Activated naive CD4-positive, alpha-beta T cell treated with anti-CD3 and anti-CD28 coated beads for 36 hours (primary cell): ENCODE measurements at regions of chr2 and their contacts with region 1.

Region 1: DNA sequence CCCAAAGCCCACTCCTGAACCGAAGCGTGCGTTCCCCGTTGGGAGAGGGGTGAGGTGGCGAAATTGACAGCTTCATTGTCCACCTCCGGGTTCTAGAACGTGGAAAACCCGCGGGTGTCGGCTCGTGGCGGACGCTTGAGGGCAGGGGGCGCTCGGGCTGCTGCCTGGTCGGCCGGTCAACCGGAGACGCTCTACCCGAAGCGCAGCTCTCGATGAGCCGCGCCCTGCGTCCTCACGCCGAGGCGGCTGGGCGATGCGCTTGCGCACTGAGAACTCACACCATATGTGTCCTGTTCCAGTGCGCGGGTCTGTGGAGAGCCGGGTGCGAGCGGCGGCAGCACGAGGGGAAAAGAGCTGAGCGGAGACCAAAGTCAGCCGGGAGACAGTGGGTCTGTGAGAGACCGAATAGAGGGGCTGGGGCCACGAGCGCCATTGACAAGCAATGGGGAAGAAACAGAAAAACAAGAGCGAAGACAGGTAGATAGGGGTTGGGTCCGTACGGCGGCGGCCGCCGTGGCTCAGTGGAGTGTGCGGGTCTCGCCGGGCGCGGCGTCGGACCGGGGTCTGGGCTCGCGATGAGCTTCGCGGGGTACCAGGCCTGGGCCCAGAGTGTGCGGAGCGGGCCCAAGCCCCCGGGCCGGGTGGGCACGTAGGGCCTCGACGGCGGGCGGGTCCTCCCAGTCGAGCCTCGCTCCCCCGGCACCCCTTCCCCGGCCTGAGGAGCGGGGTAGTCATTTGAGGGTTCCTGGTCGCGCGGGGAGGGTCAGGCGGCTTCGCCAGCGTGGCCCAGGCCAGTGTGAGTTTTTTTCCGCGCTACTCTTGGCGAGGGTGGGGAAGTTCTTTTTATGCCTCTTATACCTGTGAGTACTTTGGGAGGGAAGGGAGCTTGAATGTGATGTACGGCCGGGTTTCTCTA is at the start of gene EIF5B:
- DNase-seq: peak; percentile 92
- H3K4me3 Mint-ChIP-seq: no peak within 1 kb of the TSS
- H3K27ac Mint-ChIP-seq: no peak within 1 kb of the TSS
- H3K4me1 Mint-ChIP-seq: peaks cover 49% of the 10 kb centered on the region
- H3K27me3 Mint-ChIP-seq: no peaks in the 10 kb centered on the region
- total RNA-seq, gene EIF5B: 70.2 to 71.1 TPM

Region 2: GRCh38 chr2:97663965-97664635 is 1673.3 kb before region 1 on chr2 and contains the start of gene ACTR1B:
- CTCF ChIA-PET with region 1: no interaction called
- intact Hi-C with region 1: loop called (anchors 1 kb)
- DNase-seq: peak; percentile 98
- H3K4me3 Mint-ChIP-seq: peak within 1 kb of the TSS; percentile 93
- H3K27ac Mint-ChIP-seq: peak within 1 kb of the TSS; percentile 98
- H3K4me1 Mint-ChIP-seq: peaks cover 31% of the 10 kb centered on the region
- H3K27me3 Mint-ChIP-seq: no peaks in the 10 kb centered on the region
- total RNA-seq, gene ACTR1B: 103 to 104 TPM

Region 3: GRCh38 chr2:98608116-98608999 is 729.0 kb before region 1 on chr2 and contains the starts of genes COA5 and UNC50:
- CTCF ChIA-PET with region 1: no interaction called
- intact Hi-C with region 1: loop called (anchors 5 kb)
- DNase-seq: peak; percentile 90
- H3K4me3 Mint-ChIP-seq: peak within 1 kb of the TSS; percentile 89
- H3K27ac Mint-ChIP-seq: peak within 1 kb of the TSS; percentile 93
- H3K4me1 Mint-ChIP-seq: peaks cover 60% of the 10 kb centered on the region
- H3K27me3 Mint-ChIP-seq: no peaks in the 10 kb centered on the region
- total RNA-seq, gene COA5: 34.4 to 37.8 TPM
- total RNA-seq, gene UNC50: 23.0 to 24.1 TPM

Region 4: GRCh38 chr2:99154643-99155536 is 182.5 kb before region 1 on chr2 and contains the starts of genes LIPT1 and TSGA10:
- CTCF ChIA-PET with region 1: no interaction called
- intact Hi-C with region 1: loop called (anchors 1 kb)
- DNase-seq: peak; percentile 95
- H3K4me3 Mint-ChIP-seq: no peak within 1 kb of the TSS
- H3K27ac Mint-ChIP-seq: no peak within 1 kb of the TSS
- H3K4me1 Mint-ChIP-seq: peaks cover 39% of the 10 kb centered on the region
- H3K27me3 Mint-ChIP-seq: no peaks in the 10 kb centered on the region
- total RNA-seq, gene LIPT1: 7.0 to 8.1 TPM
- total RNA-seq, gene TSGA10: 7.2 to 8.9 TPM

Region 5: DNA sequence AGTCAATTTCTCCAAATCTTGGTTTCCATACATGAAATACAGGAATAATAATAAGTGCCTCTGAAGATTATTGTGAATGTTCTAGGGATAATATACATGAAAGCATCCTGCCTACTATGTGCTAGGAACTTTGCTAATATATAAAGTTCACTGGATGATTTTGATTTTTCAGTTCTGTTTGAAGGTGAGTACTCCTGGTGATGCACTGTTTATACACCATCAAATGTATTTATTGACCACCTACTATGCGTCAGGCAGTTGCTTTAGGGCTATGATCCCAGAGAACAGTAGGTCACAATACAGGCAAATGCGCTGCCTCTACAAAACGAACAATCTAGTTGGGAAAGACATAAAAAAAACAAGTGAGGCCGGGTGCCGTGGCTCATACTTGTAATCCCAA is 12.0 kb before region 1 on chr2:
- CTCF ChIA-PET with region 1: no interaction called
- intact Hi-C with region 1: no loop called
- DNase-seq: no peak
- H3K4me3 Mint-ChIP-seq: no peak overlapping the region
- H3K27ac Mint-ChIP-seq: peak overlapping the region; percentile 18
- H3K4me1 Mint-ChIP-seq: peaks cover under 1% of the 10 kb centered on the region
- H3K27me3 Mint-ChIP-seq: no peaks in the 10 kb centered on the region

Region 6: GRCh38 chr2:99377879-99378278 is 40.5 kb after region 1 on chr2:
- CTCF ChIA-PET with region 1: no interaction called
- intact Hi-C with region 1: loop called (anchors 2 kb)
- DNase-seq: no peak
- H3K4me3 Mint-ChIP-seq: no peak overlapping the region
- H3K27ac Mint-ChIP-seq: no peak overlapping the region
- H3K4me1 Mint-ChIP-seq: peaks cover 35% of the 10 kb centered on the region
- H3K27me3 Mint-ChIP-seq: no peaks in the 10 kb centered on the region

Region 7: GRCh38 chr2:100562732-100563720 is 1225.7 kb after region 1 on chr2 and contains the start of gene PDCL3:
- CTCF ChIA-PET with region 1: no interaction called
- intact Hi-C with region 1: loop called (anchors 2 kb)
- DNase-seq: peak; percentile 94
- H3K4me3 Mint-ChIP-seq: peak within 1 kb of the TSS; percentile 93
- H3K27ac Mint-ChIP-seq: peak within 1 kb of the TSS; percentile 98
- H3K4me1 Mint-ChIP-seq: peaks cover 43% of the 10 kb centered on the region
- H3K27me3 Mint-ChIP-seq: no peaks in the 10 kb centered on the region
- total RNA-seq, gene PDCL3: 42.2 to 42.8 TPM